Mammary epithelial cell (primary cell): ENCODE measurements at regions of chr4 and their contacts with region 1.

Region 1: GRCh38 chr4:107902715-107903114 is 28.6 kb upstream of the CYP2U1 start:
- DNase-seq: no peak
- H3K4me3 ChIP-seq: no peak overlapping the region
- H3K27ac ChIP-seq: no peak overlapping the region
- H3K4me1 ChIP-seq: peaks cover 15% of the 10 kb centered on the region
- H3K27me3 ChIP-seq: no peaks in the 10 kb centered on the region
- CTCF ChIP-seq: no peak

Region 2: GRCh38 chr4:107468812-107469211 is 433.9 kb before region 1 on chr4:
- CTCF ChIA-PET with region 1: no interaction called
- dilution Hi-C with region 1: no loop called
- in situ Hi-C with region 1: no loop called
- intact Hi-C with region 1: no loop called
- DNase-seq: no peak
- H3K4me3 ChIP-seq: no peak overlapping the region
- H3K27ac ChIP-seq: no peak overlapping the region
- H3K4me1 ChIP-seq: no peaks in the 10 kb centered on the region
- H3K27me3 ChIP-seq: no peaks in the 10 kb centered on the region
- CTCF ChIP-seq: no peak

Region 3: DNA sequence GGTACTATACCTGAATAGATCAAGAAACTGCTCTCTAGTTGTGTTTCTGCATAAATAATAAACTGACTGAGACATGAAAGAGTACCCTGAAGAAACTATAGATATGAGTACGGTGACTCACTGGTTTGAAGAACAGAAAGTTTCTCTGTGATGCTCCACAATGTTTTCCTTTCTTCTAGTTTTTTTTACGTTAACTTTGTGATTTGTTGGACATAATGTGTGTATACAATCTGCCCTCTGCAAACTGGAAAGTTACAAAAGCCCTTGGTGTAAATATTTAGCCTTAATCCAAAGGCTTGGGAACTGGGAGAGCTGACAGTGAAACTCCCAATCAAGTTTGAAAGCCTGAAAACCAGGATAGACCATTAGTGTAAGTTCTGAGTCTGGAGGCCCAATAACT is 151.0 kb before region 1 on chr4:
- CTCF ChIA-PET with region 1: no interaction called
- dilution Hi-C with region 1: loop called (anchors 25 kb)
- in situ Hi-C with region 1: loop called in 1 of 2 experiments (anchors 5 kb)
- intact Hi-C with region 1: no loop called
- DNase-seq: no peak
- H3K4me3 ChIP-seq: no peak overlapping the region
- H3K27ac ChIP-seq: no peak overlapping the region
- H3K4me1 ChIP-seq: no peaks in the 10 kb centered on the region
- H3K27me3 ChIP-seq: no peaks in the 10 kb centered on the region
- CTCF ChIP-seq: no peak

Region 4: GRCh38 chr4:107804956-107805355 is 97.8 kb before region 1 on chr4:
- CTCF ChIA-PET with region 1: no interaction called
- dilution Hi-C with region 1: loop called (anchors 5 kb)
- in situ Hi-C with region 1: no loop called
- intact Hi-C with region 1: no loop called
- DNase-seq: no peak
- H3K4me3 ChIP-seq: no peak overlapping the region
- H3K27ac ChIP-seq: no peak overlapping the region
- H3K4me1 ChIP-seq: peaks cover 15% of the 10 kb centered on the region
- H3K27me3 ChIP-seq: no peaks in the 10 kb centered on the region
- CTCF ChIP-seq: no peak